Caco-2 (cell line): ENCODE measurements at regions of chr2 and their contacts with region 1.

Region 1: DNA sequence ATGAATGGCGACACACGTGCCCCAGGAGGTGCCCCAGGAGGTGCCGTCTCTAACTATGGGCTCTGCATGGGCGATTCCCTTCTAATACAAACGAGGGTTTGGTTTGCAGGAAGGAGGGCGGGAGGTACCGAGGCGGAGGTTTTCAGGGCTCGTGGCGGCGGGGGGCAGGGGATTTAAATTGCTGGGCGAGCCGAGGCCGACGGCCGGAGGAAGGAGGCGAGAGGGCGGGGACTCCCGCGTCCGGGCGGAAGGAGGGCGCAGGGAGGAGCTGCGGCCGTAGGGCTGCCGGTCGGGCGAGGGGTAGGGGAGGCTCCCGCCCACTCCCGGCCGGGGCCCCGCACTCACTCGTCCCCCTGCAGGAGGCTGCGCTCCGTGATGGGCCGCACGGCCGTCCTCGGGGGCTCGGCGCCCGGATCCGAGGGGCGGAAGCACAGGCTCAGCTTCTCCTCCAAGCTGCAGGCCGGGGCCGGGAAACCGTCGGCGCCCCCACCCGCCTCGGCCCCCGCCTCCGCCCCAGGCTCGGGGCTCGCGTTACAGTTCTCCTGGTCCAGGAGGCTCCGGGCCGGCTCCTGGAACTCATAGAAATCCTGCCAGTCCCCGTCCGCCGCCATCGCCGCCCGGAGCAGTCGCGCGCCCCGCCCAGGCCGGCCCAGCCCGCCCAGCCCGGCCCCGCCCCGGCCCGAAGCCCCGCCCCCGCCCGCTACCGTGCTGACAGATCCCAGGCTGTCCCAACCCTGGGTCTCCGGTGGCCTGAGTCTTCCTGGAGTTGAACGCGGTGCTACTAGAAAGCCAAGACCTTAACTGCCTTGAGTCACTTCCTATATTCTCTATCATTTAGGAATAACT is at the start of gene FEZ2:
- DNase-seq: peak; percentile 87 to 93
- H3K4me3 ChIP-seq: peak within 1 kb of the TSS; percentile 75
- H3K4me3 Mint-ChIP-seq: peak within 1 kb of the TSS; percentile 90
- H3K27ac Mint-ChIP-seq: peak within 1 kb of the TSS; percentile 73
- H3K4me1 ChIP-seq: peaks cover 36% of the 10 kb centered on the region
- H3K4me1 Mint-ChIP-seq: peaks cover 33% of the 10 kb centered on the region
- H3K27me3 ChIP-seq: no peaks in the 10 kb centered on the region
- H3K27me3 Mint-ChIP-seq: no peaks in the 10 kb centered on the region
- CTCF ChIP-seq: no peak
- total RNA-seq, gene FEZ2: 50.5 and 55.8 TPM in 2 replicates

Region 2: GRCh38 chr2:36561237-36561944 is 36.4 kb before region 1 on chr2:
- CTCF ChIA-PET with region 1: no interaction called
- POLR2A ChIA-PET with region 1: no interaction called
- intact Hi-C with region 1: loop called (anchors 2 kb)
- DNase-seq: peak in 1 of 2 experiments; percentile 54
- H3K4me3 ChIP-seq: no peak overlapping the region
- H3K4me3 Mint-ChIP-seq: peak overlapping the region; percentile 35
- H3K27ac Mint-ChIP-seq: peak overlapping the region; percentile 89
- H3K4me1 ChIP-seq: peaks cover 54% of the 10 kb centered on the region
- H3K4me1 Mint-ChIP-seq: peaks cover 38% of the 10 kb centered on the region
- H3K27me3 ChIP-seq: no peaks in the 10 kb centered on the region
- H3K27me3 Mint-ChIP-seq: no peaks in the 10 kb centered on the region
- CTCF ChIP-seq: no peak

Region 3: DNA sequence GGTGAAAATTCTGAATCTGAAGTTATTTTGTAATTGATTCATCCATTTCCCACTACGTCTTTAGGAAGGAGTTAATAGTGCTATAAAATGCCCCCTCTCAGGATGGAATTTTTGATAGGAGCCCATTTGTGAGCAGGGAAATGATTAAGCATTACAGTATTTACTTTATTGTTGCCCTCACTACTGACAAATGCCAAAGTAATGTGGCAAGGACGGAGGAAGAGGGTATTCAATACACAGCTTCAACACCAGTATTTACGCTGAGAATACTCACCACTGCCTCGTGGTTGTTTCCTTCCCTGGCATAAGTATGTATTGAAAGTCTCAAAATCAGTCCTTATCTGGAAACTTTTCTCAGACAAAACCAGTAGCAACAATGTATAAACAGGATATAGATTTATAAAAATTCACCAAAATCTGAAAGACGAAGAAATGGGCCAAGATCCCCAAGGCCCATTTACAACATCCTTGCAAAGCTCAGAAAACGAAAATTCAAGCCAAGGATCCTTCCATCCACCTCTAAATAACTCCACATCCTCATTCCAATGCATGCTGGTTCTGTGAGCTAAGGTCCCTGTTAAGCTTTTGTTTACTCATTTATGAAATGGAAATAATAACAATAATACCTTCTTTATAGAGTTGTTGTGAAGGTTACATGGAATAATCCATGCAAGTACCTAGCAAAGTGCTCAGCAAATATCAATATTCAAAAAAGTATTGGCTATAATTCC is 29.1 kb before region 1 on chr2:
- CTCF ChIA-PET with region 1: no interaction called
- POLR2A ChIA-PET with region 1: interaction called, 4 read pairs
- intact Hi-C with region 1: loop called (anchors 2 kb)
- DNase-seq: no peak
- H3K4me3 ChIP-seq: no peak overlapping the region
- H3K4me3 Mint-ChIP-seq: no peak overlapping the region
- H3K27ac Mint-ChIP-seq: no peak overlapping the region
- H3K4me1 ChIP-seq: peaks cover 32% of the 10 kb centered on the region
- H3K4me1 Mint-ChIP-seq: peaks cover 16% of the 10 kb centered on the region
- H3K27me3 ChIP-seq: no peaks in the 10 kb centered on the region
- H3K27me3 Mint-ChIP-seq: no peaks in the 10 kb centered on the region
- CTCF ChIP-seq: no peak

Region 4: GRCh38 chr2:36618028-36618780 is 20.4 kb after region 1 on chr2:
- CTCF ChIA-PET with region 1: no interaction called
- POLR2A ChIA-PET with region 1: no interaction called
- intact Hi-C with region 1: loop called (anchors 1 kb)
- DNase-seq: peak; percentile 83 to 86
- H3K4me3 ChIP-seq: no peak overlapping the region
- H3K4me3 Mint-ChIP-seq: no peak overlapping the region
- H3K27ac Mint-ChIP-seq: peak overlapping the region; percentile 26
- H3K4me1 ChIP-seq: peaks cover 12% of the 10 kb centered on the region
- H3K4me1 Mint-ChIP-seq: peaks cover 24% of the 10 kb centered on the region
- H3K27me3 ChIP-seq: no peaks in the 10 kb centered on the region
- H3K27me3 Mint-ChIP-seq: no peaks in the 10 kb centered on the region
- CTCF ChIP-seq: no peak

Region 5: GRCh38 chr2:36650031-36650430 is 52.3 kb after region 1 on chr2:
- CTCF ChIA-PET with region 1: no interaction called
- POLR2A ChIA-PET with region 1: no interaction called
- intact Hi-C with region 1: loop called (anchors 2 kb)
- DNase-seq: peak; percentile 74 to 87
- H3K4me3 ChIP-seq: no peak overlapping the region
- H3K4me3 Mint-ChIP-seq: peak overlapping the region; percentile 67
- H3K27ac Mint-ChIP-seq: peak overlapping the region; percentile 96
- H3K4me1 ChIP-seq: peaks cover 26% of the 10 kb centered on the region
- H3K4me1 Mint-ChIP-seq: peaks cover 22% of the 10 kb centered on the region
- H3K27me3 ChIP-seq: no peaks in the 10 kb centered on the region
- H3K27me3 Mint-ChIP-seq: no peaks in the 10 kb centered on the region
- CTCF ChIP-seq: no peak

Region 6: GRCh38 chr2:36658277-36658779 is 60.6 kb after region 1 on chr2:
- CTCF ChIA-PET with region 1: interaction called, 3 read pairs
- POLR2A ChIA-PET with region 1: interaction called, 3 read pairs
- intact Hi-C with region 1: loop called (anchors 1 kb)
- DNase-seq: peak; percentile 84 to 91
- H3K4me3 ChIP-seq: no peak overlapping the region
- H3K4me3 Mint-ChIP-seq: peak overlapping the region; percentile 4
- H3K27ac Mint-ChIP-seq: peak overlapping the region; percentile 65
- H3K4me1 ChIP-seq: peaks cover 52% of the 10 kb centered on the region
- H3K4me1 Mint-ChIP-seq: peaks cover 26% of the 10 kb centered on the region
- H3K27me3 ChIP-seq: no peaks in the 10 kb centered on the region
- H3K27me3 Mint-ChIP-seq: no peaks in the 10 kb centered on the region
- CTCF ChIP-seq: no peak